Dorsolateral prefrontal cortex (tissue), 120 donors: ENCODE measurements at regions of chr12 and their contacts with region 1.

Region 1: DNA sequence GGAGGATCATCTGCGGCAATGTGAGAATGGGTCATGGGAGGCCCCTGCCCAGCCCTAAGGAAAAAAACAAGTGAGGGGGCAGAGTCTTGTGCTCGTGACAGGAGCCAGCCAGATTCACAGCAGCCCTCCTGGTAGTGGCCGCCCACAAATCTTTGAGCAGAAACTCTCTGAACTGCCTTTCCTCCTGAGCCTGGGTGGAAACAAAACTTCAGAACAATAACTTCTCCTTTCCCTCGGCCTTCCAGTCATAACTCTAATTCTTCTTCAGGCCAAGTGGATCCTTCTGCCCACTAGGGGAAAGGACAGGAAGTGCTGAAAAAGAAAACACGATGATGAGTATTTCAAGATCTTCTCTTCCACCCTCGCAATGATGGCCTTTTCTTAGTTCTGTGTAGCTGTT is 188.6 kb downstream of the CAND1 start:
- DNase-seq: no peak
- H3K4me3 ChIP-seq: no peak overlapping the region
- H3K27ac ChIP-seq: no peak overlapping the region
- H3K27me3 ChIP-seq: no peaks in the 10 kb centered on the region
- CTCF ChIP-seq: peak in 22 of 56 donors; percentile 10 to 40 (median 22)

Region 2: GRCh38 chr12:67151886-67152285 is 305.9 kb before region 1 on chr12:
- intact Hi-C with region 1: no loop called
- DNase-seq: no peak
- H3K4me3 ChIP-seq: no peak overlapping the region
- H3K27ac ChIP-seq: no peak overlapping the region
- H3K27me3 ChIP-seq: peaks cover 0 to 5% (median 0%) of the 10 kb centered on the region in 45 donors
- CTCF ChIP-seq: no peak

Region 3: GRCh38 chr12:67382241-67382871 is 75.4 kb before region 1 on chr12:
- intact Hi-C with region 1: no loop called
- DNase-seq: no peak
- H3K4me3 ChIP-seq: no peak overlapping the region
- H3K27ac ChIP-seq: peak overlapping the region in 1 of 59 donors; percentile 29
- H3K27me3 ChIP-seq: peaks cover 0 to 9% (median 0%) of the 10 kb centered on the region in 45 donors
- CTCF ChIP-seq: no peak

Region 4: DNA sequence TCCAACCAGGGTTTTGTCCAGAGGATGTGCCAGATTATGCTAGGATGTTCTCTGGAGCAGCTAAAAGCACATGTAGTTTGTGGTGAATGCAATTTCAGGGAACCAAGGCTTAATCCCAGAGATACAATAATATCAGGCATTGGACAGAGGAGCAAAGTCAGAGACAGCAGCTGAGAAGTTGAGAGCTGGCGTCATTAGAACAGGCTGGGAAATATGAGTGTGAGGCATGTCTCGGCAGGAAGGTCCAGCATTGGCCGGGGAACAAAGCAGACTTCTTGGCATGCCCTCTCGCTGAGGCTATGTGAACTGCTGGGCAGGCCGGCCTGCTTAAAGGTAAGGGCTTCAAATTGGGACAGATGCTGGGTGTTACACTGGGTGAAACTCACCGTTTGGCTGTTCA is 63.2 kb before region 1 on chr12:
- intact Hi-C with region 1: no loop called
- DNase-seq: peak in 2 of 10 donors; percentile 9 to 35
- H3K4me3 ChIP-seq: no peak overlapping the region
- H3K27ac ChIP-seq: peak overlapping the region in 11 of 59 donors; percentile 3 to 72 (median 21)
- H3K27me3 ChIP-seq: peaks cover 0 to 5% (median 0%) of the 10 kb centered on the region in 45 donors
- CTCF ChIP-seq: peak in 11 of 56 donors; percentile 8 to 24 (median 19)

Region 5: GRCh38 chr12:67853204-67853603 is 395.4 kb after region 1 on chr12:
- intact Hi-C with region 1: loop called in 1 of 2 experiments (anchors 5 kb)
- DNase-seq: no peak
- H3K4me3 ChIP-seq: no peak overlapping the region
- H3K27ac ChIP-seq: peak overlapping the region in 18 of 59 donors; percentile 7 to 78 (median 56)
- H3K27me3 ChIP-seq: no peaks in the 10 kb centered on the region
- CTCF ChIP-seq: no peak